OCI-LY7 (cell line): ENCODE measurements at regions of chr9 and their contacts with region 1.

Region 1: GRCh38 chr9:98315551-98316060 is 60.2 kb upstream of the TBC1D2 start:
- DNase-seq: peak; percentile 89
- H3K4me3 ChIP-seq: no peak overlapping the region
- H3K27ac ChIP-seq: no peak overlapping the region
- H3K4me1 ChIP-seq: no peaks in the 10 kb centered on the region
- CTCF ChIP-seq: peak; percentile 98

Region 2: GRCh38 chr9:98295824-98296223 is 19.8 kb before region 1 on chr9:
- CTCF ChIA-PET with region 1: no interaction called
- POLR2A ChIA-PET with region 1: no interaction called
- intact Hi-C with region 1: no loop called
- DNase-seq: no peak
- H3K4me3 ChIP-seq: no peak overlapping the region
- H3K27ac ChIP-seq: no peak overlapping the region
- H3K4me1 ChIP-seq: no peaks in the 10 kb centered on the region
- CTCF ChIP-seq: no peak

Region 3: DNA sequence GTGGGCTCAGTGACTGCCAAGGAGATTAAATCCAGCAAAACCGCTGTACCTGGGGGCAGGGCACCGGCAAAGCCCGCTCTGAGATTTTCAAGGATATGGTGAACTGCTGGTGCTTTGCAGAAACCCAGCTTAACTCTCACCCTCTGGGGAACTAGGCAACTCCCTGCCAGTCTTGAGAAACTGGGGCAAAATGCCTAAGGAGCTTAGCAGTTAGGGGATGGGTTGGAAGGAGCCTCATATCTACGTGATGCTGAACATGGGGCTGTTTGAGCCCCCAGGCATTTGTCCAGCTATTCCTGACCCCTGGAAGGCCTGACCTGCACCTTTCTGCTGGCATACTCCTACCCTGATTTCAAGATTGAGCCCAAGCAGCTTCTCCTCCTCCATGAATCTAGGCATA is 48.5 kb after region 1 on chr9:
- CTCF ChIA-PET with region 1: no interaction called
- POLR2A ChIA-PET with region 1: no interaction called
- intact Hi-C with region 1: loop called (anchors 5 kb)
- DNase-seq: no peak
- H3K4me3 ChIP-seq: no peak overlapping the region
- H3K27ac ChIP-seq: no peak overlapping the region
- H3K4me1 ChIP-seq: no peaks in the 10 kb centered on the region
- CTCF ChIP-seq: no peak

Region 4: GRCh38 chr9:98709968-98710965 is 394.7 kb after region 1 on chr9:
- CTCF ChIA-PET with region 1: no interaction called
- POLR2A ChIA-PET with region 1: no interaction called
- intact Hi-C with region 1: loop called (anchors 10 kb)
- DNase-seq: no peak
- H3K4me3 ChIP-seq: no peak overlapping the region
- H3K27ac ChIP-seq: no peak overlapping the region
- H3K4me1 ChIP-seq: no peaks in the 10 kb centered on the region
- CTCF ChIP-seq: no peak

Region 5: GRCh38 chr9:98775831-98776441 is 460.3 kb after region 1 on chr9:
- CTCF ChIA-PET with region 1: interaction called, 4 read pairs
- POLR2A ChIA-PET with region 1: interaction called, 3 read pairs
- intact Hi-C with region 1: loop called (anchors 1 kb)
- DNase-seq: peak; percentile 72
- H3K4me3 ChIP-seq: no peak overlapping the region
- H3K27ac ChIP-seq: no peak overlapping the region
- H3K4me1 ChIP-seq: no peaks in the 10 kb centered on the region
- CTCF ChIP-seq: peak; percentile 90

Region 6: GRCh38 chr9:98791147-98792095 is 475.8 kb after region 1 on chr9:
- CTCF ChIA-PET with region 1: no interaction called
- POLR2A ChIA-PET with region 1: no interaction called
- intact Hi-C with region 1: loop called (anchors 1 kb)
- DNase-seq: peak; percentile 48
- H3K4me3 ChIP-seq: no peak overlapping the region
- H3K27ac ChIP-seq: no peak overlapping the region
- H3K4me1 ChIP-seq: peaks cover 9% of the 10 kb centered on the region
- CTCF ChIP-seq: peak; percentile 97